ENCODE measurements at regions of chr16 and their contacts with region 1.

Region 1: GRCh38 chr16:85027349-85027957 is at the start of gene KIAA0513:
- DNase-seq: peak; percentile 96
- H3K4me3 Mint-ChIP-seq: peak within 1 kb of the TSS; percentile 86
- H3K27ac Mint-ChIP-seq: peak within 1 kb of the TSS; percentile 93
- H3K4me1 Mint-ChIP-seq: peaks cover 34% of the 10 kb centered on the region
- H3K27me3 Mint-ChIP-seq: no peaks in the 10 kb centered on the region
- total RNA-seq, gene KIAA0513: 15.7 to 15.9 TPM

Region 2: GRCh38 chr16:84511180-84511824 is 516.2 kb before region 1 on chr16:
- CTCF ChIA-PET with region 1: no interaction called
- POLR2A ChIA-PET with region 1: interaction called, 3 read pairs
- intact Hi-C with region 1: loop called (anchors 10 kb)
- DNase-seq: peak; percentile 82
- H3K4me3 Mint-ChIP-seq: no peak overlapping the region
- H3K27ac Mint-ChIP-seq: peak overlapping the region; percentile 44
- H3K4me1 Mint-ChIP-seq: peaks cover 67% of the 10 kb centered on the region
- H3K27me3 Mint-ChIP-seq: no peaks in the 10 kb centered on the region

Region 3: DNA sequence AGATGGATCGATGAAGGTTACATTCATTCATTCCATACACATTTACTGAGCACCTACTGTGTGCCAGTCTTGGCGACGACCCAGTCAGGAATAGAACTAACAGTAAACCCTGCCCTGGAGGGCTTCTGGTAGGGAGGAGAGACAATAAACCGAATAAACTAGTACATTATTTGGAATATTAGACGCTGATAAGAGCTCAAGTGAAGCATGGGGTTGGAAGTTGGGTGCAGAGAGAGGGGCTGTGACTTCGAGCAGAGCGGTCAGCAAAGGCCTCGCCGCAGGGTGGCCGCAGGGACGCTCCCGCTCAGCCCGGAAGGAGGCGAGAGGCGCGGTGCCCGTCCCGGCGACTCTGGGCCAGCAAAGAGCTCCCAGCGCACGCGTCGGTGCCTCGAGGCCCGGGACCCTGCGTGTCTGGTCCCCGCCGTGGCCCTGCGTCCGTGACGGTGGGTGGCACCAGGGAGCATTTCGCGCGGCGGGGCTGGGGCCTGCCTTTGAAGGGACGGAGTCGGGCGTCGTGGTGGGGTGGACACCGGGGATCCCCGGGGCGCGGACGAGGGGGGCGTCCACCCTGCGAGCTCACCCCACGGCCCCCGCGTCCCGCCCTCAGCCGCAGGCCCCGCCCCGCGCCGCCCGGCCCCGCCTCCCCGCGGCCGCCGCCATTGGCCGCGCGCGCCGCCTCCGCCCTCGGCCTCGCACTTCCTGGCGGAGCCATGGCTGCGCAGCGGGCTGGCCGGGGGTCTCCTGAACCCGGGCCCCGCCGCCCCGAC is 379.4 kb before region 1 on chr16 and contains the start of gene KLHL36:
- CTCF ChIA-PET with region 1: no interaction called
- POLR2A ChIA-PET with region 1: no interaction called
- intact Hi-C with region 1: loop called (anchors 10 kb)
- DNase-seq: peak; percentile 78
- H3K4me3 Mint-ChIP-seq: peak within 1 kb of the TSS; percentile 79
- H3K27ac Mint-ChIP-seq: peak within 1 kb of the TSS; percentile 64
- H3K4me1 Mint-ChIP-seq: peaks cover 42% of the 10 kb centered on the region
- H3K27me3 Mint-ChIP-seq: peaks cover 2% of the 10 kb centered on the region
- total RNA-seq, gene KLHL36: 56.1 to 56.8 TPM

Region 4: DNA sequence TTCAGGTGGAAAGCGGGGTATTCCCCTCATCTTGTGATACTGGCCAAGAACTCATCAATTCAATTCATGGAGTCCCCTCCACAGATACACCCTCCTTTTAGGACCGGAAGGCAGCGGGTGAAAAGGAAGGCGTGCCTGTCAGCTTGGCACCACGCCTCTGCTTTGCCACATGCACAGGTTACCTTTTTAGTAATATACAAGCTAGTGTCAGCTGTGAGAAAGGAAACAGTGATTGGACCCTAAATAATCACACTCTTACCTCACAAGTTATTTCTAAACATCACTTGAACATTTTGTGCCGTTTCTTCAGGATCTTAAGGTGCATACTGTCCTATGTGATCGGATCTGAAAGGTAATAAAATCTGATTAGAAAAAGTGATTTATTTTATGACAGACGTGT is 31.8 kb before region 1 on chr16:
- CTCF ChIA-PET with region 1: interaction called, 5 read pairs
- POLR2A ChIA-PET with region 1: interaction called, 3 read pairs
- intact Hi-C with region 1: loop called (anchors 1 kb)
- DNase-seq: peak; percentile 76
- H3K4me3 Mint-ChIP-seq: no peak overlapping the region
- H3K27ac Mint-ChIP-seq: peak overlapping the region; percentile 75
- H3K4me1 Mint-ChIP-seq: peaks cover 33% of the 10 kb centered on the region
- H3K27me3 Mint-ChIP-seq: no peaks in the 10 kb centered on the region

Region 5: GRCh38 chr16:85010931-85011845 is 16.3 kb before region 1 on chr16 and contains the start of gene ZDHHC7:
- CTCF ChIA-PET with region 1: interaction called, 18 read pairs
- POLR2A ChIA-PET with region 1: interaction called, 10 read pairs
- intact Hi-C with region 1: loop called (anchors 1 kb)
- DNase-seq: peak; percentile 89
- H3K4me3 Mint-ChIP-seq: peak within 1 kb of the TSS; percentile 99
- H3K27ac Mint-ChIP-seq: peak within 1 kb of the TSS; percentile 92
- H3K4me1 Mint-ChIP-seq: peaks cover 37% of the 10 kb centered on the region
- H3K27me3 Mint-ChIP-seq: no peaks in the 10 kb centered on the region
- total RNA-seq, gene ZDHHC7: 23.5 to 25.1 TPM

Region 6: GRCh38 chr16:85055503-85056210 is 28.2 kb after region 1 on chr16:
- CTCF ChIA-PET with region 1: interaction called, 24 read pairs
- POLR2A ChIA-PET with region 1: interaction called, 12 read pairs
- intact Hi-C with region 1: loop called (anchors 1 kb)
- DNase-seq: peak; percentile 90
- H3K4me3 Mint-ChIP-seq: peak overlapping the region; percentile 64
- H3K27ac Mint-ChIP-seq: peak overlapping the region; percentile 90
- H3K4me1 Mint-ChIP-seq: peaks cover 39% of the 10 kb centered on the region
- H3K27me3 Mint-ChIP-seq: no peaks in the 10 kb centered on the region

Region 7: DNA sequence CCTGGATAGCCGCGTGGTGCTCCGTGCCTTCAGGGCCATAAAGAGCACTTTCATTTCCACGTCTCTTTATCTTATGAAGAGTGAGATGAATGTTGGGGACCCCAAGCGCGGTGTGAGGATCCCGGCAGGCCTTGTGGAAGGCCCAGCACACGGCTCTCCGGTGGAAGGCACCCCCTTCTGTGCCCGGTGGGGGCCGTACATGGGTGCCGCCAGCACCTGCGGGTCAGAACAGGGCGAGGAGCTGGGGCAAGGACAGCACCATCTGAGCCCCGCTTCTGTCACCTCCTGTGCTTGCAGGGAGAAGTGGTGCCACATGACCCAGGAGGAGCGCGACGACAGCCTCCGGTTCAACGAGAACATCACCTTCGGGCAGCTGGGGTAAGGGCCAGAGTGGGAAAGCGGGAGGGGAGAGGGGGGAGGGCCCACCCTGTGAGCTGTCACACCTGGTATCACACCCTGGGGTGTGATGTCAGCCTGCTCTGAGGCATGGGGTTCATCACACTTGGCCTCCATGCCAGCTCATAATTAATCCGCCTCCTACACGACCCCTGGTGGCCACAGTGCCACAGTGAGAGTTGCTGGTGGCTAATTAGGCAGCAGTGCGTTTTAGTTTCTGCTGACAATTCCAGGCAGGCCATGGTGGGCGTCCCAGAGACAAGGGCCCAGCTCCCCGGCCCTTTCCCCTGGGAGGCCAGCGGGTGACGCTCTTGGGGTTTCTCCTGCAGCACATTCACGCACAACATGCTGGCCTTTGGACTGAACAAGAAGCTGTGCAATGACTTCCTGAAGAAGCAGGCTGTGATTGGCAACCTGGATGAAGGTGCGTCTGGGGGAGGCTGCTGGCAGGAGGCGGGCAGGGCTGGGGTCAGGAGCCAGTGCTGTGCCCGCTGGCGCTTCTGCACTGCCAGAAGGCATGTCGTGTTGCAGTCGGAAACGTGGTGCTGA is 59.2 kb after region 1 on chr16:
- CTCF ChIA-PET with region 1: interaction called, 14 read pairs
- POLR2A ChIA-PET with region 1: interaction called, 4 read pairs
- intact Hi-C with region 1: loop called (anchors 1 kb)
- DNase-seq: peak; percentile 86
- H3K4me3 Mint-ChIP-seq: no peak overlapping the region
- H3K27ac Mint-ChIP-seq: no peak overlapping the region
- H3K4me1 Mint-ChIP-seq: peaks cover 10% of the 10 kb centered on the region
- H3K27me3 Mint-ChIP-seq: no peaks in the 10 kb centered on the region